GM18951 (cell line): ENCODE measurements at regions of chr7 and their contacts with region 1.

Region 1: GRCh38 chr7:7681179-7681935 is 37.0 kb downstream of the RPA3 start:
- POLR2A ChIP-seq: no peak

Region 2: DNA sequence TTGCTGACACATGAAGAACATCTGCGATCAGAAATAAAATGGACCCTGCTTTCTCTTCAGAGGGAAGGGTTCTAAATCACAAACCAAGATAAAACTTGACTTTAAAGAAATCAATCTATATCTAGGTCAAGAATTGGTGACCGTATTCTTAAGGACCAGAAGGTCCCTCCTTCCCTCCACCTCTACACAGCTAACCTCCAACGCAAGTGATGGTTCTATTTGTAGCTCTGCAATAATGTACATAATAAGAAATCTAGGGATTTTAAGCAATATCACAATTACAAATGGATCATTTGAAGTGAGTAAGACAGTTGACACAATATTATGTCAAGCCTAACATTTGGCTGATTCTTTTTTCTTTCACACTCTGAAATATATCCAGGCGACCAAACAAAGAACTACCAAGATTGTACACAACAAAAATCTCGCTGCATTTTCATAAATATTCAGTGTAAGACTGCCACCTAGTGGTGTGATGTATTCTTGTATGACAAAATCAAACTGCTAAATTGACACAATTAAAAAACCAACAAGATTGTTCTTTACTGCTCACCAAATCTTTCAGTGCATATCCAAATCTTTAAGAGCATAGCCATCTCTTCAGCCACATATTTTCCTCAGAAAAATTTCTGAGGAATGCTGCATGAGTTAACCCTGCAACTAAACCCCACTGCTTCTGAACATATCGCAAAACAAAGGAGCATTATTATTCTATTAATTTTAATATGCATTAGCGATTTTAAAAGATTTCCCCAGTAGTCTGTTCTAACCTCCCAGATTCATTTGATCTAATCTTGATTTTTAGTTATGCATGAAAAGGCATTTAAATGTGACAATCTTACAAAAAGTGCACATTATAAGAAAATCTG is 536.1 kb after region 1 on chr7:
- in situ Hi-C with region 1: loop called (anchors 10 kb)
- POLR2A ChIP-seq: no peak